ENCODE measurements at regions of chr7 and their contacts with region 1.

Region 1: GRCh38 chr7:66493235-66494181 is 135.2 kb upstream of the KCTD7 start:
- DNase-seq: peak; percentile 98
- H3K4me3 ChIP-seq: peak overlapping the region; percentile 57 to 71
- H3K27ac ChIP-seq: peak overlapping the region; percentile 94 to 95
- H3K4me1 ChIP-seq: no peaks in the 10 kb centered on the region
- H3K27me3 ChIP-seq: no peaks in the 10 kb centered on the region
- CTCF ChIP-seq: peak in 2 of 4 experiments; percentile 50 to 53
- POLR2A ChIP-seq: peak; percentile 94

Region 2: GRCh38 chr7:66140924-66141323 is 352.6 kb before region 1 on chr7:
- intact Hi-C with region 1: loop called (anchors 10 kb)
- DNase-seq: peak; percentile 66
- H3K4me3 ChIP-seq: no peak overlapping the region
- H3K27ac ChIP-seq: no peak overlapping the region
- H3K4me1 ChIP-seq: peaks cover 2% of the 10 kb centered on the region
- H3K27me3 ChIP-seq: no peaks in the 10 kb centered on the region
- CTCF ChIP-seq: peak in 3 of 4 experiments; percentile 35 to 67 (median 58)
- POLR2A ChIP-seq: no peak